BJ (cell line): ENCODE measurements at regions of chr3 and their contacts with region 1.

Region 1: GRCh38 chr3:30964612-30965011 is 70.2 kb upstream of the GADL1 start:
- DNase-seq: no peak
- H3K4me3 ChIP-seq: no peak overlapping the region
- H3K27me3 ChIP-seq: no peaks in the 10 kb centered on the region
- CTCF ChIP-seq: no peak

Region 2: GRCh38 chr3:31010491-31010890 is 45.9 kb after region 1 on chr3:
- CTCF ChIA-PET with region 1: no interaction called
- POLR2A ChIA-PET with region 1: no interaction called
- DNase-seq: no peak
- H3K4me3 ChIP-seq: no peak overlapping the region
- H3K27me3 ChIP-seq: no peaks in the 10 kb centered on the region
- CTCF ChIP-seq: no peak

Region 3: GRCh38 chr3:31029706-31030105 is 65.1 kb after region 1 on chr3:
- CTCF ChIA-PET with region 1: no interaction called
- POLR2A ChIA-PET with region 1: no interaction called
- DNase-seq: no peak
- H3K4me3 ChIP-seq: no peak overlapping the region
- H3K27me3 ChIP-seq: no peaks in the 10 kb centered on the region
- CTCF ChIP-seq: no peak

Region 4: DNA sequence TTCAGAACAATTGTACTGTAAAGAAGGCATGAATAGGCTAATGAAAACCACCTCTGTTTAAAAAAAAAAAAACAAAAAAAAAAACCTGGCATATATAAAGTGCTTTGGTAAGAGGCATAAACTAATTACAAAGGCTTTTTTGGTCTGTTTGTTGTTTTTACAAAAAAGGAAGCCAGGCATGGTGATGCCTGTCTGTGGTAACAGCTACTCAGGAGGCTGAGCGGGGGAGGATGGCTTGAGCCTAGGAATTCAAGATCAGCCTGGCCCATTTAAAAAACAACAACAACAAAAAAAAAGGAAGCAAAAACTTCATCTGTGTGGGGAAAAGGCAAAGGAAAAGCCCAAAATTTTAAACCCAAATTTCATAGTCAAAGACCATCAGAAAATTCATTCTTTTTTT is 969.4 kb after region 1 on chr3:
- CTCF ChIA-PET with region 1: no interaction called
- POLR2A ChIA-PET with region 1: interaction called, 12 read pairs
- DNase-seq: no peak
- H3K4me3 ChIP-seq: no peak overlapping the region
- H3K27me3 ChIP-seq: no peaks in the 10 kb centered on the region
- CTCF ChIP-seq: no peak